Heart right ventricle (tissue), 16 donors: ENCODE measurements at regions of chr1 and their contacts with region 1.

Region 1: GRCh38 chr1:201019321-201019977 is 4.1 kb downstream of the KIF21B start:
- DNase-seq: peak in 1 of 2 donors; percentile 39
- ATAC-seq: peak in 7 of 8 donors; percentile 4 to 40 (median 18)
- H3K4me3 ChIP-seq: peak overlapping the region in 1 of 10 donors; percentile 10
- H3K27ac ChIP-seq: peak overlapping the region in 2 of 10 donors; percentile 26 to 90
- H3K4me1 ChIP-seq: peaks cover 8 to 94% (median 36%) of the 10 kb centered on the region in 9 donors
- H3K27me3 ChIP-seq: peaks cover 0 to 44% (median 29%) of the 10 kb centered on the region in 7 donors
- CTCF ChIP-seq: no peak

Region 2: GRCh38 chr1:199287647-199288046 is 1731.8 kb before region 1 on chr1:
- intact Hi-C with region 1: loop called in 1 of 10 experiments (anchors 5 kb)
- DNase-seq: no peak
- ATAC-seq: no peak
- H3K4me3 ChIP-seq: no peak overlapping the region
- H3K27ac ChIP-seq: no peak overlapping the region
- H3K4me1 ChIP-seq: peaks cover 0 to 4% (median 0%) of the 10 kb centered on the region in 9 donors
- H3K27me3 ChIP-seq: no peaks in the 10 kb centered on the region
- CTCF ChIP-seq: no peak